Activated CD4-positive, alpha-beta T cell treated with anti-CD3 and anti-CD28 coated beads for 36 hours (primary cell): ENCODE measurements at regions of chrX and their contacts with region 1.

Region 1: GRCh38 chrX:24395775-24396174 is 35.3 kb downstream of the SUPT20HL1 start:
- DNase-seq: peak; percentile 51
- ATAC-seq: peak; percentile 73
- H3K4me3 Mint-ChIP-seq: no peak overlapping the region
- H3K27ac Mint-ChIP-seq: no peak overlapping the region
- H3K4me1 Mint-ChIP-seq: peaks cover 3% of the 10 kb centered on the region
- H3K27me3 Mint-ChIP-seq: no peaks in the 10 kb centered on the region

Region 2: DNA sequence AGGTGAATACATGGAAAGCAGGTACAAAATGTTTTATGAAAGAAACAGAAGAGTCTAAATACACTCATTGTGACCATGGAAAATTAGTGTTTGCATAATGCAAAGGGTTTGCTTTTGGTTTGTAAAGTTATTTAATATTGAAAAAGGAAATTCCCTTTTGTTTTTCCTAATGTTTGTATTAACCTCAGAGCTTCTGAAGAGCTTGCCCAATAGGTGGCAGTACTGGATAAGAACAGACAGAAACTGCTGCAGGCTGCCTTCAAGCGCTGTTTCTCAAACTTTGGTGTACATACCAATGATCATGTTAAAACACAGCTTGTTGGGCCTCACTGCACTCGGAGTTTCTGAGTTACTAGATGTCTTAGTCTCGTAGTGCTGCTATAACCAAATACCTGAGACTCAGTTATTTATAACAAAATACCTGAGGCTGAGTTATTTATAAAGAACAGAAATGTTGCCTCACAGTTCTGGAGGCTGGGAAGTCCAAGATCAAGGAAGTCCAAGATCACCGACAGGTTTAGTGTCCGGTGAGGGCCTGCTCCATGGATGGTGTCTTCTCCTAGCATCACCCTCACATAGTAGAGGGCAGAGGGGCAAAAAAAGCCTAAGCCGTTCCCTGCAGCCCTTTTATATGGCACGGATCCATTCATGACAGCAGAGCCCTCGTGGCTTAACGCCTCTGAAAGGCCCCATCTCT is 136.1 kb before region 1 on chrX:
- CTCF ChIA-PET with region 1: interaction called, 14 read pairs
- POLR2A ChIA-PET with region 1: no interaction called
- intact Hi-C with region 1: loop called in 1 of 2 experiments (anchors 10 kb)
- DNase-seq: peak; percentile 41
- ATAC-seq: peak; percentile 54
- H3K4me3 Mint-ChIP-seq: no peak overlapping the region
- H3K27ac Mint-ChIP-seq: peak overlapping the region; percentile 37
- H3K4me1 Mint-ChIP-seq: peaks cover 21% of the 10 kb centered on the region
- H3K27me3 Mint-ChIP-seq: no peaks in the 10 kb centered on the region

Region 3: GRCh38 chrX:24332878-24333277 is 62.9 kb before region 1 on chrX:
- CTCF ChIA-PET with region 1: no interaction called
- POLR2A ChIA-PET with region 1: no interaction called
- intact Hi-C with region 1: no loop called
- DNase-seq: no peak
- ATAC-seq: no peak
- H3K4me3 Mint-ChIP-seq: no peak overlapping the region
- H3K27ac Mint-ChIP-seq: no peak overlapping the region
- H3K4me1 Mint-ChIP-seq: no peaks in the 10 kb centered on the region
- H3K27me3 Mint-ChIP-seq: peaks cover 4% of the 10 kb centered on the region

Region 4: DNA sequence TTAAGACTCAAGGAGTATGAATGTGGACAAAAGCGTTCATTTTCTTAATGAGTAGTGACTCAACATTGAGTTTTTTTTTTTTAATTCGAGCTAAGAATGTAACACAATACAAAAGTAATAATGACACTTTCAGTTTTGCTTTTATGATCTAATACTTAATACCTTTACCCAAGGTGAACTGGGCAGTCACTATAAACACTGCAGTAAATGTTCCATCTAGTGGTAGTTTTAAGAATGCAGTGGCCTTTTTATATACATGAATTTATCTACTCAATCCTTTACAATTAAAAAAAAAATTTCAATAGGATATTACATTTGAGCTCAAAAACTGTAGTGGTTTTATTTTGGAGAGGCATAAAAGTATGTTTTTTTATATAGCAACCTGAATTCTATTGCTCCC is 103.2 kb after region 1 on chrX:
- CTCF ChIA-PET with region 1: interaction called, 82 read pairs
- POLR2A ChIA-PET with region 1: interaction called, 3 read pairs
- intact Hi-C with region 1: loop called (anchors 1 kb)
- DNase-seq: no peak
- ATAC-seq: peak; percentile 78
- H3K4me3 Mint-ChIP-seq: no peak overlapping the region
- H3K27ac Mint-ChIP-seq: peak overlapping the region; percentile 43
- H3K4me1 Mint-ChIP-seq: peaks cover 23% of the 10 kb centered on the region
- H3K27me3 Mint-ChIP-seq: no peaks in the 10 kb centered on the region

Region 5: DNA sequence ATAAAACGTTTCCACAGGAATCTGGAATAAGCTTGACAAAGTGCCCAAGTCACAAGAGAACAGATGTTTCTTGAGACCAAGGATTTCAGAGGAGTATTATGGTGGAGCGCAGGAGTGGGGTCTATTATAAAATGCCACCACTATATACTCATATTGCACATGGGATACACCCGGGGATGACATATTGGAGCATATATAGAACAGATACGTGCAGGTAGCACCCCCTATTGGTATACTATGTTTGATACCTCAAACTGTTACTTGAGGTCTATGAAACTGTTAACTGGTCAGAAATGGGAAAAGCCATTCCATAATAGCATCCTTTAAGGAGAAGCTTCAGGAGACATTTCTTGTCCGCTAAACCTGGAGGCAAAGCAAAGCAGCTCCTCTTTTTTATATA is 165.3 kb after region 1 on chrX:
- CTCF ChIA-PET with region 1: interaction called, 5 read pairs
- POLR2A ChIA-PET with region 1: no interaction called
- intact Hi-C with region 1: loop called (anchors 1 to 2 kb)
- DNase-seq: no peak
- ATAC-seq: no peak
- H3K4me3 Mint-ChIP-seq: no peak overlapping the region
- H3K27ac Mint-ChIP-seq: no peak overlapping the region
- H3K4me1 Mint-ChIP-seq: no peaks in the 10 kb centered on the region
- H3K27me3 Mint-ChIP-seq: no peaks in the 10 kb centered on the region

Region 6: DNA sequence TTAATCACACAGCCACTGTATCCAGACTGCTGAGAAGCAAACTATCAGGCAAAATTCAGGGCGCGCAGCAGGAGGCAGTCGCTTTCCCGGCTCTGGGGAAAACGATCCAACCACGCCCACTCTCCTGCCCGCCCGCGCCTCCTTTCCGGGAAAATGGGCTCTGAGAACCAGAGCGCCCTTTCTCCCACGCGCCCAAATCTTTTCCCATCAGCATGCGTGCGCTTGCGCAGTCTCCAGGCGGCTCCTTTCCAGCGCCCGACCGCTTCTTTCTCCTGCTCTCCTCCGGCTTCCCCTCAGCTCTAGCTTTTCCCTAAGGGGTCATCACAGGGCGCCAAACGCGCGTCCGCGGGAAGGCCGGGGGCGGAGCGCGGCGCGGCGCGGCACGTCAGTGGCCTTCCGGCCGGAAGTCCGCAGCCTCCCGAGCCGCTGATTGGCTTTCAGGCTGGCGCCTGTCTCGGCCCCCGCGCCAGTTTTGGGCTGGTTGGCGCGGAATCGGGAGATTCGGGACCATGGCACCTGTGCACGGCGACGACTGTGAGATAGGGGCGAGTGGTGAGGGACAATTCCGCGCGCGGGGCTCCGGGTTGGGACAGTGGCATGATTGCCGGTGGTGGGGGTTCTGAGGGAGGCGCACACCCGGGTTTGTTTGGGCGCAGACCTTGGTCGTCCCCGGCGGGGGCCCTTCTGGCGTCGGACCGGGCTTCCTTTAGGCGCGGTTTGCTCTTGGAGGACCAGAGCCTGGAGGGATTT is 297.9 kb after region 1 on chrX and contains the start of gene POLA1:
- CTCF ChIA-PET with region 1: no interaction called
- POLR2A ChIA-PET with region 1: no interaction called
- intact Hi-C with region 1: loop called in 1 of 2 experiments (anchors 10 kb)
- DNase-seq: peak; percentile 89
- ATAC-seq: peak; percentile 93
- H3K4me3 Mint-ChIP-seq: peak within 1 kb of the TSS; percentile 85
- H3K27ac Mint-ChIP-seq: peak within 1 kb of the TSS; percentile 88
- H3K4me1 Mint-ChIP-seq: peaks cover 24% of the 10 kb centered on the region
- H3K27me3 Mint-ChIP-seq: no peaks in the 10 kb centered on the region
- total RNA-seq, gene POLA1: 48.4 to 52.1 TPM

Region 7: GRCh38 chrX:25015486-25016360 is 619.9 kb after region 1 on chrX and contains the start of gene ARX:
- CTCF ChIA-PET with region 1: no interaction called
- POLR2A ChIA-PET with region 1: no interaction called
- intact Hi-C with region 1: loop called in 1 of 2 experiments (anchors 10 kb)
- DNase-seq: peak; percentile 72
- ATAC-seq: peak; percentile 83
- H3K4me3 Mint-ChIP-seq: no peak within 1 kb of the TSS
- H3K27ac Mint-ChIP-seq: no peak within 1 kb of the TSS
- H3K4me1 Mint-ChIP-seq: peaks cover 12% of the 10 kb centered on the region
- H3K27me3 Mint-ChIP-seq: peaks cover 46% of the 10 kb centered on the region
- total RNA-seq, gene ARX: not detected